ENCODE measurements at regions of chr2 and their contacts with region 1.

Region 1: DNA sequence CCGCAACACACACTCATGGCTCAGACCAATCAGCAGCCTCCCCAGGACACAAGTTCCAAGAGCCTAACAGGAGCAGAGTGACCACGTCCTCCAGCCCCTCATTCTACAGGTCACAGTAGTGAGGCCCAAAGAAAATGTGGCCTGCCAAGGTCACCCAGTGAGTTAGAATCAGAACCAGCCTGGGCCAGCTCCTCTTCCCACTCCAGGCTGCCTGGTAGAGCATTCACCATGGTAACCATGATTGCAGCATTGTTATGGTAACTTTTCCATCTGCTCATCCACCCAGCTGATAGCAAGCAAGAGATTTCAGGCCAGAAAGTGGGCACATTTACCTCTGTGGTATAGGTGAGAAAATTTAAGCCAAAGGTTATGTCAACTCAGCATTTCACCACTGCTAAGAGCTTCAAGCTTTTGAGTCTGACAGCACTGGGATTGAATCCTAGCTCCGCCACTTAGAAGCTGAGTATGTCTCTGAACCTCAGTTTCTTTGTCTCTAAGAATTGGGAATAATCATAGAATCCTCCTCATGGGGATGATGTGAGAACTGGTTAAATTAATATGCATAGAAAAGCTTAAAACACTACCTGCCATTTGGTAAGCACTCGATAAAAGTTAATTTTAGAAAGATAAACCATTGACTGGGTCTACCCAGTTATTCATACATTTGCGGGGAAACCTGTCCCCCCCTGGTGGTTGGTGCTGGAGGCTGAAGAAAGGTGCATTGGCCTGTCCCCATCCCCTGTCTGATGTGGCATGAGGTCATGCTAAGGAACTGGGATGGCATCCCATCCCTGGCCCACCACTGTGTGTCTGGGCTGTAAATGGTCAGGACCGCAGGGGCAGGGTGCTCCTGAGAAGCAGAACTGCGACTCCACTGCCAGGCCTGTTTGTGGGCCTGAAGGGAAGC is 181.5 kb downstream of the KLHL29 start:
- DNase-seq: no peak
- ATAC-seq: peak; percentile 54; the same call in 2 of the 3 replicates
- H3K4me3 ChIP-seq: no peak overlapping the region
- H3K27ac ChIP-seq: no peak overlapping the region
- H3K4me1 ChIP-seq: no peaks in the 10 kb centered on the region
- H3K27me3 ChIP-seq: no peaks in the 10 kb centered on the region
- CTCF ChIP-seq: peak; percentile 33 to 46 (median 34); a peak in 5 of 6 replicates
- EP300 ChIP-seq: no peak
- POLR2A ChIP-seq: no peak
- RAD21 ChIP-seq: peak; percentile 35

Region 2: GRCh38 chr2:23199115-23199918 is 367.2 kb before region 1 on chr2:
- CTCF ChIA-PET with region 1: no interaction called
- POLR2A ChIA-PET with region 1: no interaction called
- RAD21 ChIA-PET with region 1: no interaction called
- SMC1A ChIA-PET with region 1: no interaction called
- in situ Hi-C with region 1: no loop called
- intact Hi-C with region 1: loop called (anchors 10 kb)
- DNase-seq: no peak
- ATAC-seq: peak; percentile 72
- H3K4me3 ChIP-seq: no peak overlapping the region
- H3K27ac ChIP-seq: no peak overlapping the region
- H3K4me1 ChIP-seq: no peaks in the 10 kb centered on the region
- H3K27me3 ChIP-seq: no peaks in the 10 kb centered on the region
- CTCF ChIP-seq: peak; percentile 53 to 73 (median 72)
- EP300 ChIP-seq: no peak
- POLR2A ChIP-seq: no peak
- RAD21 ChIP-seq: peak; percentile 27; the same call in 1 of the 2 replicates

Region 3: GRCh38 chr2:23312996-23313606 is 253.4 kb before region 1 on chr2:
- CTCF ChIA-PET with region 1: no interaction called
- POLR2A ChIA-PET with region 1: no interaction called
- RAD21 ChIA-PET with region 1: interaction called, 3 read pairs
- SMC1A ChIA-PET with region 1: no interaction called
- in situ Hi-C with region 1: no loop called
- intact Hi-C with region 1: loop called (anchors 2 kb)
- DNase-seq: peak; percentile 5
- ATAC-seq: peak; percentile 99
- H3K4me3 ChIP-seq: no peak overlapping the region
- H3K27ac ChIP-seq: no peak overlapping the region
- H3K4me1 ChIP-seq: no peaks in the 10 kb centered on the region
- H3K27me3 ChIP-seq: peaks cover 0 to 1% of the 10 kb centered on the region in 2 experiments; a peak in 2 of 4 replicates
- CTCF ChIP-seq: peak; percentile 73 to 98 (median 97)
- EP300 ChIP-seq: no peak
- POLR2A ChIP-seq: no peak
- RAD21 ChIP-seq: peak; percentile 73

Region 4: GRCh38 chr2:23636426-23636825 is 69.9 kb after region 1 on chr2:
- CTCF ChIA-PET with region 1: no interaction called
- POLR2A ChIA-PET with region 1: no interaction called
- RAD21 ChIA-PET with region 1: no interaction called
- SMC1A ChIA-PET with region 1: no interaction called
- in situ Hi-C with region 1: no loop called
- intact Hi-C with region 1: no loop called
- DNase-seq: no peak
- ATAC-seq: no peak; the same call in 2 of the 3 replicates
- H3K4me3 ChIP-seq: no peak overlapping the region
- H3K27ac ChIP-seq: no peak overlapping the region
- H3K4me1 ChIP-seq: no peaks in the 10 kb centered on the region
- H3K27me3 ChIP-seq: no peaks in the 10 kb centered on the region
- CTCF ChIP-seq: no peak
- EP300 ChIP-seq: no peak
- POLR2A ChIP-seq: no peak
- RAD21 ChIP-seq: no peak